ENCODE measurements at regions of chr3 and their contacts with region 1.

Region 1: DNA sequence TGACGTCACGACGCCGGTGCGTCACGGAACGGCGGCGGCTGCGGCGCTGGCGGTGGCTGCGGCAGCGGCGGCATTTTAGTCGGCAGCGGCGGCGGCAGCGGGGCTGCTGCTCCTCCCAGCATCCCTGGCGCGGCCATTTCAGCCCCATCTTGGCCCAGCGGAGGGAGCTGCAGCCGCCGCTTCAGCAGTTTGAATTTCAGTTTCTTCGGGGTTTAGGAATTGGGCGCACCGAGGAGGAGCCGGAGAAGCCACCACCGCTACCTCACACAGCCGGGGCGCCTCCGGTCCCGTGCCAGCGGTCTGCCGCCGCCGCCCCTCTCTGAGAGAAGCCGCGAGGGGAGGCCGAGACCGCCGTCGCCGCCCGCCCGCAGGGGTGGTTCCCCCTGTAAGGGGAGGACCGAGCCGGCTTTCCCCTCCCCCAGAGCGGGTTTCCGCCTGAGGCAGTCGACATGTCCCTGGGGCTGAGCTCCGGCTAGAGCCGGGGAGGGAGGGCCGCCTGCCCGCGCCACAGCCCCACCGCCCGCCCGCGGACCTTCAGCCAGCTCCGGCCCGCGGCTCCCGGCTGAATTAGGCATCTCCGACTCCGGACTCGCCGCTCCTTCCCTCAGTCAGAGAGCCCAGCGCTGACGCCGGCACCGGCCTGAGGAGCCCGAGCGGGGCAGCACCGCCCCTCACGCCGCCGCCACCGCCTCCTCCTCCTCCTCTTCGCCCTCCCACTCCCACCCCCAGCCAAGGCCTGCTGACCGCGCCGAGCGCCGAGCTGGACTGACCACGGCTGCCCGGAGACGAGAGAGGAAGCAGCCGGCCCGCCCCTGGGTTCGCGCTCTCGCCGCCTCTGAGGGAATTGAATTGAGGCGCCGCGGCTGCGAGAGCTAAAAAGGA is at the start of gene TSC22D2:
- DNase-seq: peak; percentile 93
- H3K4me3 ChIP-seq: peak within 1 kb of the TSS; percentile 73 to 93 (median 81)
- H3K27ac ChIP-seq: peak within 1 kb of the TSS; percentile 99
- H3K4me1 ChIP-seq: peaks cover 5% of the 10 kb centered on the region
- H3K27me3 ChIP-seq: no peaks in the 10 kb centered on the region
- CTCF ChIP-seq: peak in 1 of 2 donors; percentile 31
- total RNA-seq, gene TSC22D2: 16.3 to 38.8 TPM

Region 2: DNA sequence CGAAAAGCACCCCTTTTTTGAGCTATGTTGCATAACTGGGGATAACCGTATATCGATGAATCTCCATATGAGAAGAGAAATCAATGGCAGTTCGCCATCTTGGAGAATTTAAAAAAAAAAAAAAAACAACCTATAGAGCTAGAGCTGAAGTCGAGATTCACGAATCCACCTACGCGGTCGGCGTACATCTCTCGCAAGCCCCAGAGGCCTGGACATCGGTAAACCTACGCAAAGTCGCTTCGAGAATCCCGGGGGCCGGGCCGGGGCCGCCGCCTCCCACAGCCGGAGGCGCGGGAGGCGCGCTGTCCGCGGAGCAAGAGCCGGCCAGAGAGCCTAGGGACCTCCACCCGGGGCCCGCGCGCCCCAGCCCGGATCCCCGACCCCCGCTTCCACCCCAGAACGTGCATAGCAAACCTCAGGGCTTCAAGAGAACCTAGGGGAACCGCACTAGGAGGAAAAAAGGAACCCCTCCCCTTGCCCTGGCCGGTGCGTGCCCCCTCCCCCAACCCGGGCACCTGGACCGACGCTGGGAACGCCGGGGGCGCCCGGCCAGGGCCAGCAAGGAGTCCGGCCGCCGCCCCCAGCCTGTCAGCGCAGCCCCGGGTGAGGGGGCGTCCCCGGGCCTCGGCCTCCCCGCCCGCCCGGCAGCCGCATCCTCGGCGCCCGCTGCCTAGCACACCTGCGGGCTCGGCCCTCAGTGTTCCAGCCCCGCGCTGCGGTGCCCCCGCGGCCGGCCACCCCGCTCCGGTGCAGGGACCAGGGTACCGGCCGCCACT is 438.3 kb before region 1 on chr3:
- CTCF ChIA-PET with region 1: no interaction called
- dilution Hi-C with region 1: no loop called
- in situ Hi-C with region 1: no loop called
- intact Hi-C with region 1: loop called (anchors 5 kb)
- DNase-seq: peak; percentile 79
- H3K4me3 ChIP-seq: peak overlapping the region; percentile 86 to 94 (median 89)
- H3K27ac ChIP-seq: peak overlapping the region; percentile 94
- H3K4me1 ChIP-seq: peaks cover 24% of the 10 kb centered on the region
- H3K27me3 ChIP-seq: no peaks in the 10 kb centered on the region
- CTCF ChIP-seq: no peak

Region 3: GRCh38 chr3:150074697-150075416 is 333.6 kb before region 1 on chr3:
- CTCF ChIA-PET with region 1: no interaction called
- dilution Hi-C with region 1: no loop called
- in situ Hi-C with region 1: no loop called
- intact Hi-C with region 1: no loop called
- DNase-seq: no peak
- H3K4me3 ChIP-seq: no peak overlapping the region
- H3K27ac ChIP-seq: no peak overlapping the region
- H3K4me1 ChIP-seq: peaks cover 25% of the 10 kb centered on the region
- H3K27me3 ChIP-seq: no peaks in the 10 kb centered on the region
- CTCF ChIP-seq: no peak

Region 4: DNA sequence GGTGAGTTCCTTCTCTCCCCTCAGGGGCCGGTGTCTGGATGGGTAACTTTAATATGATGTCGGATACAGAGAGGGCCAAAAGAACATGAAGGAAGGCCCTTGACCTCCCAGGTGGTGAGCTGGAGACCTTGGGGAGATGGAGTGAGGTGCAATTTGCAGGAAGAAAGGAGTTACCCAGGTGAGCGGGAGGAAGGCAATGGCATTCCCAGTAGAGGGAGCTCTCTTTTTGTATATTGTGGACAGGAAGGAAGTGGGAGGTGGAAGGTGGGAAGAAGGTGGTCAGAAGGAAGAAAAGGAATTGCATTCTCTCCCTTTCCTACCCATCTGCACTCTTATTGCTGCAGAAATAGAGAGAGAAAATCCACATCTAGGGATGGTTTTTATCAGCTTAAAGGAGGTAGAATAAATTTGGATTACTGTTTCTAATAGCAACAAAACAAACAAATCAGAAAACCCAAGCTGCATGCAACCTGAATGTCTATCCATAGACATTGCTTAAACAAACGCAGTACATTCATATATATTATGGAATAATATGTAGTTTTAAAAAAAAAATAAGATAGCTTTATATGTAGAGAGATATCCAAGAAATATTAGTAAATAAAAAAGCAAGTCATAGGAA is 169.4 kb before region 1 on chr3:
- CTCF ChIA-PET with region 1: interaction called, 7 read pairs
- dilution Hi-C with region 1: no loop called
- in situ Hi-C with region 1: no loop called
- intact Hi-C with region 1: loop called (anchors 1 kb)
- DNase-seq: peak; percentile 59
- H3K4me3 ChIP-seq: no peak overlapping the region
- H3K27ac ChIP-seq: no peak overlapping the region
- H3K4me1 ChIP-seq: peaks cover 38% of the 10 kb centered on the region
- H3K27me3 ChIP-seq: no peaks in the 10 kb centered on the region
- CTCF ChIP-seq: peak; percentile 62 to 72

Region 5: GRCh38 chr3:150293401-150294061 is 114.9 kb before region 1 on chr3:
- CTCF ChIA-PET with region 1: no interaction called
- dilution Hi-C with region 1: no loop called
- in situ Hi-C with region 1: loop called in 1 of 2 experiments (anchors 10 kb)
- intact Hi-C with region 1: no loop called
- DNase-seq: no peak
- H3K4me3 ChIP-seq: no peak overlapping the region
- H3K27ac ChIP-seq: no peak overlapping the region
- H3K4me1 ChIP-seq: no peaks in the 10 kb centered on the region
- H3K27me3 ChIP-seq: no peaks in the 10 kb centered on the region
- CTCF ChIP-seq: no peak

Region 6: GRCh38 chr3:150348500-150348899 is 60.0 kb before region 1 on chr3:
- CTCF ChIA-PET with region 1: interaction called, 9 read pairs
- dilution Hi-C with region 1: no loop called
- in situ Hi-C with region 1: no loop called
- intact Hi-C with region 1: loop called (anchors 1 kb)
- DNase-seq: peak; percentile 95
- H3K4me3 ChIP-seq: no peak overlapping the region
- H3K27ac ChIP-seq: peak overlapping the region; percentile 93
- H3K4me1 ChIP-seq: peaks cover 84% of the 10 kb centered on the region
- H3K27me3 ChIP-seq: no peaks in the 10 kb centered on the region
- CTCF ChIP-seq: no peak

Region 7: GRCh38 chr3:150449169-150449721 is 40.8 kb after region 1 on chr3:
- CTCF ChIA-PET with region 1: no interaction called
- dilution Hi-C with region 1: no loop called
- in situ Hi-C with region 1: no loop called
- intact Hi-C with region 1: loop called (anchors 1 kb)
- DNase-seq: peak; percentile 70
- H3K4me3 ChIP-seq: peak overlapping the region in 2 of 3 experiments; percentile 9 to 28
- H3K27ac ChIP-seq: peak overlapping the region; percentile 52
- H3K4me1 ChIP-seq: peaks cover 33% of the 10 kb centered on the region
- H3K27me3 ChIP-seq: no peaks in the 10 kb centered on the region
- CTCF ChIP-seq: no peak

Region 8: DNA sequence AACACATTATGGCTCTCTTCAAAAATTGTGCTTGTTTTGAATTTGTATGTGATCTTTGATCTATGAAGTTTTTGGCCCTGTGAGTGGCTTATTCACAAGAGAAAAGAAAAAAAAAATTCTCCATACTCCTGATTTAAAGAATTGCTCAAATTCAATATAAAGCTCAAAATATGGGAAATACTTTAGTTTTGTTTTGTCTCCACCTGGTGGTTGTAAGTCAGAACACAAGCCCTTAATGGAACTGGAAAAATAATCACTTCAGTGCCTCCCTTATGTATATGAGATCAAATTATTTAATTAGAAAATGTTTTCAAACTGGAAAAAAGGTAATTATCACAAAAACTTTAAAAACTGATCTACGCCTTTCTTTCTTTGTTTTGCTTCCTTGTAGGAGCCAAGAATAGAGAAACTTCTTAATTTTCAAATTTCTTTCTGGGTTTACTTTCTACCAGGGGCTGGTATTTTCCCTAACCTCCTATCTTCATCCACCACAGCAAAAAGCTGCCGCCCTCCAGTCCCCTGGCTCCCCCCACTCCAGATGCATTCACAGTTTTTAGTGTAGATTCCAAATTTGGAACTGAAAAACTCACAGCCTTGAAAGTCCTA is 87.2 kb after region 1 on chr3:
- CTCF ChIA-PET with region 1: interaction called, 5 read pairs
- dilution Hi-C with region 1: no loop called
- in situ Hi-C with region 1: loop called (anchors 10 kb)
- intact Hi-C with region 1: loop called (anchors 1 kb)
- DNase-seq: peak; percentile 29
- H3K4me3 ChIP-seq: no peak overlapping the region
- H3K27ac ChIP-seq: no peak overlapping the region
- H3K4me1 ChIP-seq: no peaks in the 10 kb centered on the region
- H3K27me3 ChIP-seq: no peaks in the 10 kb centered on the region
- CTCF ChIP-seq: peak; percentile 59 to 60

Region 9: DNA sequence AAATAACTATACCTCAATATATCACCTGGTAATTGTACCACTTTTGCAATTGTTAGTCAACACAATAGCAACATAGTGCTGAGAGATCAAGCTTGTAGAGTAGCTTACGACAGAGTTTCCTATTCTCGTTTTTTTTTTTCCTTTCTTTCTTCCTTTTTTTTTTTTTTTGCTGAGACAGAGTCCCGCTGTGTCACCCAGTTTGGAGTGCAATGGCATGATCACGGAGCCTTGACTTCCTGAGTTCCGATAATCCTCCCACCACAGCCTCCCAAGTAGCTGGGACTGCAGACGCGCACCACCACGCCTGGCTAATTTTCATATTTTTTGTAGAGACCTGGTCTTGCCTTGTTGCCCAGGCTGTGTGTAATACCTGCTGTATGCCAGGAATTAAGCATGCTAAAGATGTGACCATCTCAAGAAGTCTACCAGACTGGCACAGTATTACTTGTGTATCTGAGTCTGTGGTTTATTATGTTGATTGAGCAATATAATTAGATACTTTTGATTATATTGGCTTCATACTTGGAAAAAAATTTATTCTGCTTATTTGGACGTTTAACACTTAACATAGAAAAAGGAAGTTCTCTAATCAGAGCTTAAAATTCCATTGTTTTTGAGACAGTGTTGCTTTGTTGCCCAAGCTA is 197.7 kb after region 1 on chr3:
- CTCF ChIA-PET with region 1: no interaction called
- dilution Hi-C with region 1: no loop called
- in situ Hi-C with region 1: no loop called
- intact Hi-C with region 1: no loop called
- DNase-seq: no peak
- H3K4me3 ChIP-seq: no peak overlapping the region
- H3K27ac ChIP-seq: no peak overlapping the region
- H3K4me1 ChIP-seq: peaks cover 2% of the 10 kb centered on the region
- H3K27me3 ChIP-seq: no peaks in the 10 kb centered on the region
- CTCF ChIP-seq: no peak

Measured in mammary epithelial cell (primary cell).